ENCODE measurements at regions of chr11 and their contacts with region 1.

Region 1: GRCh38 chr11:125123947-125124617 is 12.7 kb upstream of the TMEM218 start:
- DNase-seq: peak; percentile 68
- ATAC-seq: peak; percentile 87
- H3K4me3 Mint-ChIP-seq: no peak overlapping the region
- H3K27ac Mint-ChIP-seq: no peak overlapping the region
- H3K4me1 Mint-ChIP-seq: no peaks in the 10 kb centered on the region
- H3K27me3 Mint-ChIP-seq: peaks cover 22% of the 10 kb centered on the region

Region 2: GRCh38 chr11:124961972-124962609 is 162.0 kb before region 1 on chr11:
- CTCF ChIA-PET with region 1: interaction called, 9 read pairs
- POLR2A ChIA-PET with region 1: no interaction called
- intact Hi-C with region 1: loop called (anchors 1 to 5 kb)
- DNase-seq: no peak
- ATAC-seq: peak; percentile 98
- H3K4me3 Mint-ChIP-seq: no peak overlapping the region
- H3K27ac Mint-ChIP-seq: no peak overlapping the region
- H3K4me1 Mint-ChIP-seq: no peaks in the 10 kb centered on the region
- H3K27me3 Mint-ChIP-seq: no peaks in the 10 kb centered on the region

Region 3: DNA sequence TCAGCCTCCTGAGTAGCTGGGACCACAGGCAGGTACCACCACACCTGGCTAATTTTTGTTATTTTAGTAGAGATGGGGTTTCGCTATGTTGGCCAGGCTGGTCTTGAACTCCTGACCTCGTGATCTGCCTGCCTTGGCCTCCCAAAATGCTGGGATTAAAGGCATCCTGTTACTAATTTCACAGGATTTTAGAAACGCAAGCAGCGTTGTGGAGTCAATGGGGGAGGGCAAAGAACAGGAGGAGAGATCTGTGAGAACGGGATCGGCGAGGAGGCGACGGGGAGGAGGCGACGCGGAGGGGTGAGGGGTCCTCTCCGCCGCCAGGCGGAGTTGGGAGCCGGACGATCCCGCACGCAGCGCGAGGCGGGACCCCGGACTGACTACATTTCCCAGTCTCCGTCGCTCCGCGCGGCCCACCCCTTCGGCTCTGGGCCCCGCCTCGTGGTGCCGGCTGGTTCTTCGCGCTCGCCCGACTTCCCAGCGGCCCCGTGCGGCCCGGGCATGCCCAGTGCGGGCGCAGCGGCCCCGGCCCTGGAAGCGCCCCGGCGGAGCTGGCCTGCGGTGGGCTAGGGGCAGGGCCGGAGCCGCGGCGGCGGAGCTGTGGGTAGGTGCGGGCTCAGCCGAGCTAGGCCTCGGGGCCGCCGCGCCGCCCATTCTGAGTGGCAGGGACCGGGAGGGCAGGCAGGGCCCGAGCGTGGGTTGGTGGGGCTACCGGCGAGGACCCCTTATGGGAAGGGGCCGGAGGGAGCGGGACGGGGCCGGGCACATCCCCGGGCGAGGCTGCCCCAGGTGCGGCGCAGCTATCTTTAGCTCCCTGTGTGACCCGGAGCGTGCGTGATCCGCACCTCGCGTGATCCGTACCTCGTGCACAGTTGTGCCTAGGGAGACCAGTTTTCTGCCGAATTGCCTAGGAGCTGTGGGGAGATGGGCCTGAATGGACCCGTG is 445.2 kb after region 1 on chr11 and contains the start of gene EI24:
- CTCF ChIA-PET with region 1: no interaction called
- POLR2A ChIA-PET with region 1: no interaction called
- intact Hi-C with region 1: no loop called
- DNase-seq: peak; percentile 95
- ATAC-seq: peak; percentile 95
- H3K4me3 Mint-ChIP-seq: peak within 1 kb of the TSS; percentile 92
- H3K27ac Mint-ChIP-seq: peak within 1 kb of the TSS; percentile 93
- H3K4me1 Mint-ChIP-seq: peaks cover 24% of the 10 kb centered on the region
- H3K27me3 Mint-ChIP-seq: no peaks in the 10 kb centered on the region
- total RNA-seq, gene EI24: 36.3 to 36.6 TPM

Measured in activated CD4-positive, alpha-beta T cell treated with anti-CD3 and anti-CD28 coated beads for 36 hours (primary cell).